ENCODE measurements at regions of chr7 and their contacts with region 1.

Region 1: GRCh38 chr7:21253740-21254687 is 173.9 kb upstream of the SP4 start:
- DNase-seq: peak; percentile 69
- ATAC-seq: peak; percentile 67
- H3K4me3 Mint-ChIP-seq: no peak overlapping the region
- H3K27ac Mint-ChIP-seq: no peak overlapping the region
- H3K4me1 Mint-ChIP-seq: no peaks in the 10 kb centered on the region
- H3K27me3 Mint-ChIP-seq: peaks cover 50% of the 10 kb centered on the region
- CTCF ChIP-seq: peak; percentile 51

Region 2: DNA sequence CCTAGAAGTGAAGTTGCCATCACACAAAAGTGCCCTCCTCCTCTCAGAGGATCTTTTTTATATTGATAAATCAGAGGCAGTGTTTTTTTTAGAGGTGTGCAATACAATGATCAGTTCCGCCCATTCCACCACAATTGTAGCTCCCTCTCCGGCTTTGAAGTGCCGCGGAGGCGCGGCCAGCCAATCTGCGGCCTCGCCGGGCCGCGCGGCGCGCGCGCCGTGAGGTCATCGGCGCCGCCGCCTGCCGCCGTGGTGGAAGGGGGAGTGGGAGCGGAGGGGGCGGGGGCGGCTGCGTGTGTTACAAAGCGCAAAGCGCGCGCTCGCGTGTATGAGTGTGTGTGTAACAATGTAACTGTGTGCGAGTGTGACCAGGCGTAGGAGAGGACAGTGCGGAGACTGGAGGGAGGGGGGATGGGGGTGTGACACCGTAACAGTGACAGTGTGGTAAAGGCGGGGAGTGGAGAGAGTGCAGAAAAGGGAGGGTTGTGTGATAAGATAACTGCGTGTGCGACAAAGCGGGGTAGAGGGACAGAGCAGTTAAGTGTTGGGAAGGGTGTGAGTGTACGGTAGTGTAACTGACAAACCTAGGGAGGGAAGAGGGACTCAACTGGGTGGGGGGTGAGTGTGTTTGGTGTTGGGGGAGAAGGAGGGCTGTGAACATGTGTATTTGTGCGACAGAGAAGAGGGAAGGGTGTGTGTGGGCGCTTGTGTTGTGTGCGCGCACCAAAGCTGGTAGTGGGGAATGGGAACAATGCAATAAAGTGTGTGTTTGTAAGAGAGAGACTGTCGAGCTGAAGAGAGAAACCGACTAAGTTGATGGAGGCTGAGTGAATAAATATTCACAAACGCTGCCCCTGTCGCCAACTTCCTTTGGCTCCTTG is 467.0 kb before region 1 on chr7 and contains the start of gene SP8:
- CTCF ChIA-PET with region 1: interaction called, 4 read pairs
- POLR2A ChIA-PET with region 1: no interaction called
- intact Hi-C with region 1: loop called (anchors 10 kb)
- DNase-seq: peak; percentile 40
- ATAC-seq: peak; percentile 59
- H3K4me3 Mint-ChIP-seq: peak within 1 kb of the TSS; percentile 58
- H3K27ac Mint-ChIP-seq: no peak within 1 kb of the TSS
- H3K4me1 Mint-ChIP-seq: peaks cover 15% of the 10 kb centered on the region
- H3K27me3 Mint-ChIP-seq: peaks cover 75% of the 10 kb centered on the region
- CTCF ChIP-seq: no peak
- total RNA-seq, gene SP8: not detected

Region 3: DNA sequence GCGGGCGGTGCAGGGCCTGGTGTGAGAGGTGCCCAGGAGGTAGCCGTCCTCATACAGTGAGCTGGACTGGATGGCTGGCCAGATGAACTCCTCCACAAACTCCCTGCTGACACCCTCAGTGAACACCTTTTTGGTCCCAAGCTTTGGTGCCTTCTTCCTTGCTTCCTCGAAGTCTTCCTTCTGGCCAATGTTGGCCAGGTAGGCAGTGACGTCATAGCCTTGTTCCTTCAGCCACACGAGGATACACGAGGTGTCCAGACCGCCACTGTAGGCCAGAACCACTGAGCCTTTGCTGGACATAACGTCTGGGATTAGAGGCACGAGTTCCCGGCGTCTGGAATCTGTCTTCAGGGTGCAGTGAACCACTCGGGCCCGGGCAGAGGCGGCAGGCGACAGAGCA is 32.9 kb before region 1 on chr7:
- CTCF ChIA-PET with region 1: no interaction called
- POLR2A ChIA-PET with region 1: no interaction called
- intact Hi-C with region 1: no loop called
- DNase-seq: no peak
- ATAC-seq: no peak
- H3K4me3 Mint-ChIP-seq: no peak overlapping the region
- H3K27ac Mint-ChIP-seq: no peak overlapping the region
- H3K4me1 Mint-ChIP-seq: no peaks in the 10 kb centered on the region
- H3K27me3 Mint-ChIP-seq: no peaks in the 10 kb centered on the region
- CTCF ChIP-seq: no peak

Region 4: GRCh38 chr7:21281183-21281582 is 27.2 kb after region 1 on chr7:
- CTCF ChIA-PET with region 1: no interaction called
- POLR2A ChIA-PET with region 1: no interaction called
- intact Hi-C with region 1: no loop called
- DNase-seq: no peak
- ATAC-seq: no peak
- H3K4me3 Mint-ChIP-seq: no peak overlapping the region
- H3K27ac Mint-ChIP-seq: peak overlapping the region; percentile 31
- H3K4me1 Mint-ChIP-seq: peaks cover 7% of the 10 kb centered on the region
- H3K27me3 Mint-ChIP-seq: no peaks in the 10 kb centered on the region
- CTCF ChIP-seq: no peak

Region 5: DNA sequence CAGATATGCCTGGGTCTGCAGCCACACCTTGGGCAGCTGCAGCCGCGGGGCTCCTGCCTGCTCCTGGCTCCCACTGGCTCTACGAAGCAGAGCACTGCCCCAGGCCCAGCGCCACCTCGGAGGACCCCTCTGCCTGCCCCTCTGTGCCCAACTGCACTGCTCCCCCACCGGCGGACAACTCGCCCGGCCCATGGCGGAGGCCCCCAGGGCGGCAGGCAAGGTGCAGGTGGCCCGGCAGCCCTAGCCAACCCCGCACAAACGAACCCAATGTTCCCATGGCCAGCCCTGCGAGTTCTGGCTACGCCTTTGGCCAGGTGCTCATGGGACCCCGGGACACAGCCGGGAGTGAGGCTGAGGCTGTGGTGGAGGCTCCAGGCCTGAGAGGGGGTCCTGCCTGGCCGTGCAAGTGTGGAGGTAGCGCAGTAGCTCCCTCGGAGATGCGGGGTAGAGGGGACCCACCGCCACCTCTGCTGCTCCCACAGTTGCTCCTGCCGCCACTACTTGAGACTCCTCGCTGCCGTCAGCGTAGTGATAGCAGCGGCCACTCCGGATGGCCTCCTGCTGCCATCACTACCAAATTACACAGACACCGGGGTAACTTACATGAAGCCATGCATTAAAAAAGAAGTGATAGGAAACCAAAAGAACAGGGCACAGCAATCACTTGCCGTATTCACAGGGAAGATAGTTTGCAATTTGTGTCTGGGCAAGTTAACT is 76.6 kb after region 1 on chr7:
- CTCF ChIA-PET with region 1: no interaction called
- POLR2A ChIA-PET with region 1: no interaction called
- intact Hi-C with region 1: no loop called
- DNase-seq: no peak
- ATAC-seq: no peak
- H3K4me3 Mint-ChIP-seq: no peak overlapping the region
- H3K27ac Mint-ChIP-seq: no peak overlapping the region
- H3K4me1 Mint-ChIP-seq: peaks cover 6% of the 10 kb centered on the region
- H3K27me3 Mint-ChIP-seq: no peaks in the 10 kb centered on the region
- CTCF ChIP-seq: no peak

Region 6: DNA sequence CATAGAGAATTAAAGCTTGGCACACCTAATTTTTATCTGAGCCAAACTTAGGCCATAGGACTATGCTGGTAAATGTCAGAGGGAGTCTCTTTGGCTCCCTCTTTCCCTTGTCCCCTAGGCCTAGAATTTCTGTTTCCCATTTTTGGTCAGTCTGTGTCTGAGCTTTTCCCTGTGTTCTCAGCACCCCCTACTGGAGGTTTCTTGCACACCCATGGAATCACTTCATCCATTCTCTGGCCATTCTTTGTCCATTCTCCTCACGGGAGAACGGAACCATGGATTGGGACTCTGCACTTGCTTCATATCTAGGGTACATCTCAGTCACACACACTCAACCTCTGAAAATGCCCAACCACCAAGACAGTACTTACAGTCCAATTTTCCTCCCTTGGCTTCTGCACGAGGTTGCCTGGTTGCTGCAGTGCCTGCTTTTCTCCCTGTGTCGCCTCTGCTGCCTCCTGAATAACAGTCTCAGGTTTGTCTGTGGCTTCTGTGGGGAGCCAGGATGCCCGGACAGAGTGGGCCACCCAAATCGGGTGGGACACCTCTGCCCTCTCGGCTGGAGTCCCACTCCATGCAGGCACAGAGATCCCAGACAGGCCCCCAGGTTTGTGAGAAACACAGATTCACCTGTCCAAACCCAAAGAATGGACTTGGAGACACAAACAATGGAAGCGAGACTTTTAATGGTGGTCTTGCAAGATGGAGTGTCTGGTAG is 253.8 kb after region 1 on chr7:
- CTCF ChIA-PET with region 1: interaction called, 7 read pairs
- POLR2A ChIA-PET with region 1: no interaction called
- intact Hi-C with region 1: loop called (anchors 2 kb)
- DNase-seq: peak; percentile 51
- ATAC-seq: no peak
- H3K4me3 Mint-ChIP-seq: no peak overlapping the region
- H3K27ac Mint-ChIP-seq: no peak overlapping the region
- H3K4me1 Mint-ChIP-seq: peaks cover 2% of the 10 kb centered on the region
- H3K27me3 Mint-ChIP-seq: no peaks in the 10 kb centered on the region
- CTCF ChIP-seq: peak; percentile 67

Region 7: GRCh38 chr7:21767300-21767900 is 513.4 kb after region 1 on chr7:
- CTCF ChIA-PET with region 1: interaction called, 13 read pairs
- POLR2A ChIA-PET with region 1: no interaction called
- intact Hi-C with region 1: no loop called
- DNase-seq: peak; percentile 43
- ATAC-seq: peak; percentile 47
- H3K4me3 Mint-ChIP-seq: no peak overlapping the region
- H3K27ac Mint-ChIP-seq: no peak overlapping the region
- H3K4me1 Mint-ChIP-seq: peaks cover 10% of the 10 kb centered on the region
- H3K27me3 Mint-ChIP-seq: peaks cover 2% of the 10 kb centered on the region
- CTCF ChIP-seq: peak; percentile 35

Region 8: GRCh38 chr7:22001345-22002004 is 747.5 kb after region 1 on chr7:
- CTCF ChIA-PET with region 1: interaction called, 5 read pairs
- POLR2A ChIA-PET with region 1: no interaction called
- intact Hi-C with region 1: loop called (anchors 10 kb)
- DNase-seq: peak; percentile 6
- ATAC-seq: peak; percentile 80
- H3K4me3 Mint-ChIP-seq: no peak overlapping the region
- H3K27ac Mint-ChIP-seq: no peak overlapping the region
- H3K4me1 Mint-ChIP-seq: peaks cover 2% of the 10 kb centered on the region
- H3K27me3 Mint-ChIP-seq: no peaks in the 10 kb centered on the region
- CTCF ChIP-seq: peak; percentile 87

Measured in activated CD8-positive, alpha-beta T cell treated with anti-CD3 and anti-CD28 coated beads for 36 hours (primary cell).